Posterior vena cava (tissue), 2 donors: ENCODE measurements at regions of chr12 and their contacts with region 1.

Region 1: DNA sequence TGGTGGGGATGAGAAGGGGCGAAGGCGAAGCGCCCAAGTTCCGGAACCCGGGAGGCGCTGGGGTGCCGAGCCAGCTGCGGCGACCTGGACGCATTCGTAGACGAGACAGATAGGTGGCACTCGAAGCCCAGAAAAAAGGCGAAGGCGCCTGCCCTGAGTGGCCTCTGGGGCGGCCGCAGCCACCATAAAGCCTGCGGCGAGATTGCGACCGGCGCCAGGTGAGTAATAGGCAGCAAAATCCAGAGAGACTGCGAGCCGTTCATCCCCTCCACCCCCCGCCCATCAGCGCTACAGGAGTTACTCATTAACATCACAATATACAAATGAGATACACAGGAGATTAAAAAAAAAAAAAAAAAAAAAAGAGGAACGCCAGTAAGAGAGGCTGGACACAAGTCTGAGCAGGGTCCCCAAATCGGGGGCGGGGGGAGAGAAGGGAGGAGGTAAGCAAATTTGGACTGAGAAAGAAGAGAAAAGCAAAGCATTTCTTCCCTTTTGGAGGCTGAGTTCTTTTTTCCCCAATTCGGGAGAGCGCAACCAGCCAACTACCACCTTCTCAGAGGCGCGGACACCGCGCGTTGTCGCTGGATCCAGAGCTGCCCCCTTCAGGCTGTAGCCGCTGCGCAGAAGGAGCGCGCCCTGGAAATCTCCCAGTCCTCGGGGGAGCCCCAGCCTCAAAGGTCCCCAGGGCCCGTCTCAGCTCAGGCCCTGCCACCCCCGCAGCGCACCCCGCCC is 15.7 kb downstream of the TBX3 start:
- DNase-seq: peak; percentile 88

Region 2: DNA sequence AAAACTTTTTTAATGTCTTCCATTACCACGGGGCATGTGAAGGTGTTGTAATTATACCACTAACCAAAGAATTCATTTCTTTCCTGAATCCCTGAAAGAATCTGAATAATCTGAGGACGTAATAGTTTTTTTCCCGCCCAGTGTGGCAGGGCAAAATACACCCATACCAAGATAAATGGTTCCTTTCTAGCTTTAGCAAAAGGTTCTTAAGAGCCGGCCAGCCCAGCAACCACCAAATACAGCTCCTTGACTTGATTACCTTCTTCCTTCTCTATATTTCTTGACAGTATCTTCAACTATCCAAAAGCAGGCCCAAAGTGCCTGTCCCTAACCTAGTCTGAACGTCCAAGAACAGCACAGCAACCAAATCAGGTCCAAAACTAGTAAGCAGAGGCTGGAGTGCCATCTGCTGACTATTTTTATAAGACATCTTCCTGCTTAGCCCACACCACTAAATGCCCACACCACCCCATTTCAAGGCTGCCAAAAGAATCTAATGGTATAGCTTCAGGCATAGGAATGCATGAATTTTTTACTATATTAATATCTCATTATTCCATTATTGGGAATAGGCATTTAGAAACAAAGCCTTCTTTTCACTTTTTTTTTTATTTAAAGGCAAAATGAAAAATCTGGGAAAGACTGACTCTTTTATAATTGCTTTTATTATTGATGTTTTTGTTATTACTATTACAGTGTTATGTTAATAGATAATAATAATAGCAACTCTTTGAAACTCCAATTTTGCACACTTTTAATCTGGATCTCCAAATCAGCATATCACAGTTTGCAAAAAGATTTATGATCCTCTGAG is 1084.8 kb after region 1 on chr12:
- intact Hi-C with region 1: loop called (anchors 5 kb)
- DNase-seq: no peak

Region 3: DNA sequence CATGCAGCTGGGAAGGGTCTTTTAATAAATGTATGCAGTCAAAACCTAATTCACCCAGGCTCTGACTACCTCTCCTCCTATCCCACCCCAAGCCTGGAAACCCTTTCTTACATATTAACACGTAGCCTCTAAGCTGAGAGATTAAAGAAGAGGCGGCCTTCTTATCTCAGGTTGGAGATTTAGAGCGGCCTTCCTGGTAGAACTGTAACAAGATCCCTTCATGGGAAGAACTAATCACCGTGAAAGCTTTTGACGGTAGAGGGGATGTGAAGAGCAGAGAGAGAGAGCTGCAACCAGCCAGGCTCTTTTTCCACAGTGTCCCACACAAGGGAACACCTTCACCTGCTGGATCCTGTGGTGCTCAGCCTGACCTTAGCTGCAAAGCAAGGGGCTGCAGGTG is 1241.7 kb after region 1 on chr12:
- intact Hi-C with region 1: loop called (anchors 5 to 10 kb)
- DNase-seq: no peak